ENCODE measurements at regions of chr22 and their contacts with region 1.

Region 1: DNA sequence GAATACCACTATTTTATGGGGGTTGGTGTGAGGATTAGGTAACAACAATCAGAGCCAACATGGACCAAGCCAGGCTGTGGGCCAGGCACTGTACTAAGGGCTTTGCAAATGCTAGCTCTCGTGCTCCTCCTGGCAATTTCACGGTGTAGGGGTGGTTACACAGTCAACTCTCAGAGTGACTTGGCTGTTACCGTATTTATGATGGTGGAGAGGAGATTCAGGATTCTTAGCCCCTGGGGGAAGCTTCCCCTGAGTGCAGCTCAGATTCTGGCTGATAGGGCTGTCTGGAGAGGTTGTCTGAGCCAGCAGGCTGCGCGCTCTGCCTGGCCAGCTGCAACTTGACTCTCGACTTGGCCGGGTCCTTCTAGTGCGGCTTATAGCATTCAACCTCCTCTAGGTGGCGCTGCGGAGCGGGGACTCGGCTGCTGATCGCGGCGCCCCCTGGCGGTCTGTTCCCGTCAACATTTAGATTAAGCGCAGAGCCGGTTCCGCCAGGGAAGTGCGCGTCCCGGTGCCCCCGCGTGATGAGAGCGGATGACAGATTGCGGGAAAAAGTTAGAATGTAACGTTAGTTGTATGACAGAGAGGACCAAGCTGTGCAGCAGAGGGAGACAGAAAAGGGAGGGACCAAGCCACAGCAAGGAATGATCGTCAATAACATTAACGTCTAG is 4.5 kb upstream of the NCF4 start:
- DNase-seq: peak; percentile 89
- H3K4me3 ChIP-seq: no peak overlapping the region
- H3K27ac ChIP-seq: no peak overlapping the region
- H3K4me1 ChIP-seq: no peaks in the 10 kb centered on the region
- H3K27me3 ChIP-seq: no peaks in the 10 kb centered on the region
- CTCF ChIP-seq: peak; percentile 97 to 100 (median 100)
- POLR2A ChIP-seq: no peak

Region 2: DNA sequence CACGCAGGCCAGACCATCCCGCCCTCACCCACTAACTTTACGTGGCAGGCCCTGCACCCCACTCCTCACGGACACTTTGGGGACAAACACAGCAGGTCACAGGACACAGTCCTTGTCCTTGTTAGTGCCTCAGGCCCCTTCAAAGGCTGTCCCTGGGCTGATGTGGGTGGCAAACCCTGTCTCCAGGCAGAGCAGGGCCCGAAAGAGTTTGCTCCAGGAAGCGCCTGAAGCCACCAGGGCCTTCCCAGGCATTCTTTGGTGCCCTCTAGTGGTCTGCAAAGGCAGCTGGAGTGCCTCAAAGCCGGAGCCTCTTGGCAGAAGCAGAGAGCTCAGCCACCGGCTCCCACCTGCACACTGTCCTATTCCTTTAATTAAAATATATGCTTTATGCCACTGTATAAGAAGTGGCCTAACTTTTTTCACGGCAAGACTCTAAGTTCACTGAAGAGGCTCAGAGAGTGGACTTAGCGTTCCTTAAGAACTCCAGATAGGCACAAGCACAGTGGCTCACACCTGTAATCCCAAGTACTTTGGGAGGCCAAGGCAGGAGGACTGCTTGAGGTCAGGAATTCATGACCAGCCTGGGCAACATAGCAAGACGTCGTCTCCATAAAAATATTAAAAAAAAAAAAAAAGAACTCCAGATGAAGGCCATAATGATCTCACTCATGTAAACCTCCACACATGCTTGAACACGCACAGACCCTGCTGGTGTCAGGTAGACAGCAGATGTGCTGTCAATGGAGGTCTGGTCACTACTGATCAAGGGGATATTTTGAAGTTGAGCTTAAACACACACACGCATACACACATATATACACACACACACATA is 385.9 kb before region 1 on chr22:
- intact Hi-C with region 1: no loop called
- DNase-seq: peak; percentile 86
- H3K4me3 ChIP-seq: no peak overlapping the region
- H3K27ac ChIP-seq: peak overlapping the region; percentile 82
- H3K4me1 ChIP-seq: peaks cover 16% of the 10 kb centered on the region
- H3K27me3 ChIP-seq: no peaks in the 10 kb centered on the region
- CTCF ChIP-seq: peak; percentile 93 to 99 (median 96)
- POLR2A ChIP-seq: peak; percentile 9

Region 3: DNA sequence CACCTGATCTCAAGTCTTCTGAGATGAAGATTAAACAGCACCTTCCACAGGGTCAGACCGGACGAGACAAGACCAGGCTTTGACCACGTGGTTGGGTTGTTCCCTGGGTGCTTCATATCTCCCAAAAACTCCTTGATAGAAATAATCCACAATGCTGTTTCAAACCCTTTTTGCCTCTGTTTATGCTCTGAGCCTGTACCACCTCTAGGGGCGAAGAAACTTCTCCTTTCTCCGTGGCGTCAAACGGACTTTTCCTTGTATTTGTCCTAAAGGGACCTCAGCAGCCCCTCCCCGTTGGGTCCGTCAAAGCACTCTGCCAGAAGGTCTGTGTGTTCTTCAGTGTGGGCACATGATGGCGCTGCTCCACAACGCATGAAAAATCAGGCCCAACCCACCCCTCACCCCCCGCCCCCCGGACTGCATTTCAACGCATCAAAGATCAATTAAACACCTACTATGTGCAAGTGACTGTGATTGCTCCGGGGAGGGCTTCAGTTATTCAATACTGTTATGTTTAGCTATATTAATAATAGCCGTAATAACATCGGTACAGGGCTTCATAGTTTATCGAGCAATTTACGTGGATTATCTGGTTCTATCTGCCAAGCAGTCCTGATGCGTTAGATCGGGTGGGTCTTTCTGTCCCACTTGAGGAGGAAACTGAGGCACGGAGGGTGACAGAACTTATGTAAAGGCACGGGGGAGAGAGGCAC is 310.0 kb before region 1 on chr22:
- intact Hi-C with region 1: loop called (anchors 5 kb)
- DNase-seq: peak; percentile 14
- H3K4me3 ChIP-seq: no peak overlapping the region
- H3K27ac ChIP-seq: no peak overlapping the region
- H3K4me1 ChIP-seq: no peaks in the 10 kb centered on the region
- H3K27me3 ChIP-seq: no peaks in the 10 kb centered on the region
- CTCF ChIP-seq: peak in 3 of 4 experiments; percentile 20 to 42 (median 33)
- POLR2A ChIP-seq: no peak

Region 4: GRCh38 chr22:36775964-36776669 is 80.1 kb before region 1 on chr22 and contains the start of gene IFT27:
- intact Hi-C with region 1: loop called (anchors 2 kb)
- DNase-seq: peak; percentile 100
- H3K4me3 ChIP-seq: peak within 1 kb of the TSS; percentile 88 to 91
- H3K27ac ChIP-seq: peak within 1 kb of the TSS; percentile 84 to 85
- H3K4me1 ChIP-seq: no peaks in the 10 kb centered on the region
- H3K27me3 ChIP-seq: no peaks in the 10 kb centered on the region
- CTCF ChIP-seq: peak in 1 of 4 experiments; percentile 11
- POLR2A ChIP-seq: peak; percentile 57
- total RNA-seq, gene IFT27: 16.5 to 26.4 TPM

Region 5: GRCh38 chr22:36977947-36978660 is 121.8 kb after region 1 on chr22:
- intact Hi-C with region 1: loop called (anchors 5 kb)
- DNase-seq: peak; percentile 89
- H3K4me3 ChIP-seq: peak overlapping the region in 1 of 2 donors; percentile 25
- H3K27ac ChIP-seq: no peak overlapping the region
- H3K4me1 ChIP-seq: peaks cover 5% of the 10 kb centered on the region
- H3K27me3 ChIP-seq: no peaks in the 10 kb centered on the region
- CTCF ChIP-seq: peak; percentile 84 to 99 (median 97)
- POLR2A ChIP-seq: no peak

Measured in prostate gland (tissue), 2 donors.